ENCODE measurements at regions of chr4 and their contacts with region 1.

Region 1: GRCh38 chr4:56467284-56468096 is at the start of gene SRP72:
- DNase-seq: peak; percentile 96
- total RNA-seq, gene SRP72: 43.4 TPM

Region 2: GRCh38 chr4:56424697-56425514 is 42.6 kb before region 1 on chr4:
- intact Hi-C with region 1: loop called (anchors 1 kb)
- DNase-seq: no peak

Measured in cardiac septum (tissue), 1 donor.